ENCODE measurements at regions of chr7 and their contacts with region 1.

Region 1: GRCh38 chr7:94295850-94296249 is 98.8 kb upstream of the COL1A2 start:
- DNase-seq: no peak
- ATAC-seq: peak; percentile 37 to 69
- H3K4me3 ChIP-seq: no peak overlapping the region
- H3K27ac ChIP-seq: peak overlapping the region in 2 of 4 donors; percentile 36 to 67
- H3K4me1 ChIP-seq: peaks cover 0 to 4% of the 10 kb centered on the region in 2 donors
- H3K27me3 ChIP-seq: no peaks in the 10 kb centered on the region
- CTCF ChIP-seq: peak in 3 of 5 experiments; percentile 23 to 27 (median 25)
- POLR2A ChIP-seq: no peak

Region 2: GRCh38 chr7:93921607-93922566 is 374.0 kb before region 1 on chr7 and contains the start of gene GNG11:
- in situ Hi-C with region 1: no loop called
- intact Hi-C with region 1: loop called (anchors 10 kb)
- DNase-seq: peak; percentile 27 to 44
- ATAC-seq: peak; percentile 69 to 72
- H3K4me3 ChIP-seq: peak within 1 kb of the TSS; percentile 58 to 68 (median 63)
- H3K27ac ChIP-seq: peak within 1 kb of the TSS; percentile 76 to 85 (median 82)
- H3K4me1 ChIP-seq: peaks cover 5 to 15% of the 10 kb centered on the region in 2 donors
- H3K27me3 ChIP-seq: peaks cover 3 to 19% (median 10%) of the 10 kb centered on the region in 3 donors
- CTCF ChIP-seq: no peak
- POLR2A ChIP-seq: peak; percentile 21 to 40
- total RNA-seq, gene GNG11: 4.6 to 11.4 (median 6.9) TPM

Region 3: GRCh38 chr7:93992423-93993110 is 303.3 kb before region 1 on chr7:
- in situ Hi-C with region 1: no loop called
- intact Hi-C with region 1: no loop called
- DNase-seq: no peak
- ATAC-seq: no peak
- H3K4me3 ChIP-seq: no peak overlapping the region
- H3K27ac ChIP-seq: no peak overlapping the region
- H3K4me1 ChIP-seq: no peaks in the 10 kb centered on the region
- H3K27me3 ChIP-seq: no peaks in the 10 kb centered on the region
- CTCF ChIP-seq: no peak
- POLR2A ChIP-seq: no peak

Region 4: DNA sequence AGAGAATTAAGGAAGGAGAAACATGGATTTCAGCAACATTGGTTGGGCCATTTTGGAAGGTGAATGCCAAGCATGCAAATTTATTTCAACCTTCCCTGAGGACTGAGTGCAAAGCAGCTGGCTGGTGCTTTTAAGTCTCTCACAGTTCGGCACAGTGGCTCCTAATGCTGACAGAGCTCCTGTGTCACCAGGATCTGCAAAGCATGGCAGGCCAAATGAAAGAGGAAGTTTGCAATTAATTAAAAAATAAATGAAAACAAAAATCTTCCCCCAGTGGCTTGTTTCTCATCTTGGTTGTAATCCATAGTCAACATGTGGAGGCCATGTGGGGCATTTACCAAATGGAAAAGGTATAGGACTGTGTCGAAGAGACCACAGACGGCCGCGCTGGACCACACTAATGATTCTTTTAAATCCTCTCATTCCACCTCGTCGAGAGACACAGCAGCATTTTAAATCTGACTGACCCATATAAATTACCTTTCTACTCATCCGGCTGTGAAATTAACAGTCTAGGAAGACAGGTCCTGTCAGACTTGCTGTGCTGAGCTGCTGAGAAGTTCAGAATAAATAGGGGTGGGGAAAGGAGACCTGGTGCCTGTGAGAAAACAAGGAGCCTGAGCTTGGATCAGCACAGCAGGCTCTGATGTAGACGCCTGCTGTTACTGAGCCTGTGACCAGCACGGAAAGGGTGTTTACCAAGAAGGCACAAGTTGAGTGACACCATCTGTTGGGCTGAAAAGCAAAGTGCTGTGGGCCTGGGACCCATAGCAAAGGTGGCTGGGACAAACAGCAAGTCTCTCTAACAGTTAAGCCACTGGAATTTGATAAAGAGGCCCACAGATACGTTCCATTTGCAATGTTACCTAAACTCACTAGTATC is 37.2 kb before region 1 on chr7:
- in situ Hi-C with region 1: no loop called
- intact Hi-C with region 1: no loop called
- DNase-seq: no peak
- ATAC-seq: no peak
- H3K4me3 ChIP-seq: no peak overlapping the region
- H3K27ac ChIP-seq: no peak overlapping the region
- H3K4me1 ChIP-seq: no peaks in the 10 kb centered on the region
- H3K27me3 ChIP-seq: no peaks in the 10 kb centered on the region
- CTCF ChIP-seq: no peak
- POLR2A ChIP-seq: no peak

Region 5: GRCh38 chr7:94395141-94396036 is 99.5 kb after region 1 on chr7:
- in situ Hi-C with region 1: loop called in 3 of 4 experiments (anchors 5 to 10 kb)
- intact Hi-C with region 1: loop called (anchors 2 kb)
- DNase-seq: peak in 1 of 2 donors; percentile 39
- ATAC-seq: peak; percentile 65 to 82
- H3K4me3 ChIP-seq: peak overlapping the region; percentile 44 to 55 (median 54)
- H3K27ac ChIP-seq: peak overlapping the region; percentile 61 to 75 (median 67)
- H3K4me1 ChIP-seq: peaks cover 0 to 5% of the 10 kb centered on the region in 2 donors
- H3K27me3 ChIP-seq: peaks cover 14 to 39% (median 16%) of the 10 kb centered on the region in 3 donors
- CTCF ChIP-seq: peak; percentile 47 to 63 (median 60)
- POLR2A ChIP-seq: no peak

Region 6: DNA sequence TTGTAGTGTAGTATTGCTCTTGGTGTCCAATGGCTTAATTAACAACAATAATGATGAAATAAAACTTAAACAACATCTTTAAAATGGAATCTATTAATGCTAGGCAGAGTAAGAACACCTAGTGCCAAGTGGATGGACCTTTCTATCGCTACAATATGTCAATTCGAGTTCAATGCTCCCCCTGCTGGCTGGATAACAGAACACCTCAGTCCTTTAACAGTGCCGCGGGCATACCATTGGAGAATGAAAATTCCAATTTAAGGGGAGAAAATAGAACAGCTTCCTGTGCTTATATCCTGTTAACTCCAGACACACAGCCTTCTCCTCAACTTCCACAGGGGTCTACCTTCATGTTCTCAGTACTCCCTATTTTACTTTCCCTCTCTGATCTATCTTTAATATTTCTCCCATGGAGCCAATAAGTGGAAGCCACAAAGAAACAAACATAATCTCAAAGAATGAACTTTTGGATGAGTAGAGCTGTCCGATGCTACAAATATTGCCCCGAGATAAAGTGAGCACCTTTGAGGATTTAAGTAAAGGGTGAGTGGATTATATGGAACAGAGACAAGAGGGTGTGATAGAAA is 140.3 kb after region 1 on chr7:
- in situ Hi-C with region 1: loop called in 1 of 4 experiments (anchors 10 kb)
- intact Hi-C with region 1: no loop called
- DNase-seq: peak; percentile 26 to 43
- ATAC-seq: peak; percentile 47 to 80
- H3K4me3 ChIP-seq: no peak overlapping the region
- H3K27ac ChIP-seq: no peak overlapping the region
- H3K4me1 ChIP-seq: no peaks in the 10 kb centered on the region
- H3K27me3 ChIP-seq: no peaks in the 10 kb centered on the region
- CTCF ChIP-seq: peak; percentile 36 to 73 (median 62)
- POLR2A ChIP-seq: no peak